ENCODE measurements at regions of chr3 and their contacts with region 1.

Region 1: GRCh38 chr3:28241221-28242160 is at the start of gene CMC1:
- DNase-seq: peak; percentile 94 to 98 (median 97)
- H3K4me3 ChIP-seq: peak within 1 kb of the TSS; percentile 63 to 100 (median 91)
- H3K27ac ChIP-seq: peak within 1 kb of the TSS in 52 of 59 donors; percentile 3 to 90 (median 72)
- H3K27me3 ChIP-seq: no peaks in the 10 kb centered on the region
- CTCF ChIP-seq: peak in 30 of 56 donors; percentile 5 to 57 (median 24)
- total RNA-seq, gene CMC1: 10.0 to 27.2 (median 17.9) TPM

Region 2: DNA sequence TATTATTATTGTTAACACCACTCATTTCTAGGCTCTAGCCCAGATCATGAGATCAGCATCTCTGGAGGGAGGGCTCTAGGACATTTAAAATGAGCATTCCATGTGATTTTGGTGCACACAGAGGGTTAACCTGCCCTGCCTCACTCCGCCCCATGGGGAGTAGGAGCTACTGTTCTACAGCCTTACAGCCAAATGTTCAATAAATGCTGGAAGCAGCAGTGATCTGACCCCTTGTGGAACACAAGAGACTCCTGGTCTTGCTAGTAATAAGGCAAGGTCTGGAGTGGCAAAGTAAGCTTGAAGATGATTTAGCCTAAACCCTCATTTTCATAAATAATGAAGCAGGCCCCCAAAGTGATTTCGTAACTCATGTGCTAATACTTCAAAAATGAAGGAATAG is 352.9 kb before region 1 on chr3:
- intact Hi-C with region 1: no loop called
- DNase-seq: no peak
- H3K4me3 ChIP-seq: no peak overlapping the region
- H3K27ac ChIP-seq: no peak overlapping the region
- H3K27me3 ChIP-seq: peaks cover 0 to 15% (median 0%) of the 10 kb centered on the region in 45 donors
- CTCF ChIP-seq: no peak

Region 3: GRCh38 chr3:27960133-27960532 is 281.4 kb before region 1 on chr3:
- intact Hi-C with region 1: no loop called
- DNase-seq: no peak
- H3K4me3 ChIP-seq: no peak overlapping the region
- H3K27ac ChIP-seq: no peak overlapping the region
- H3K27me3 ChIP-seq: peaks cover 0 to 6% (median 0%) of the 10 kb centered on the region in 45 donors
- CTCF ChIP-seq: no peak

Region 4: GRCh38 chr3:28348629-28349483 is 107.4 kb after region 1 on chr3 and contains the starts of genes AZI2 and ZCWPW2:
- intact Hi-C with region 1: loop called (anchors 5 kb)
- DNase-seq: peak; percentile 78 to 93 (median 89)
- H3K4me3 ChIP-seq: peak within 1 kb of the TSS; percentile 50 to 98 (median 86)
- H3K27ac ChIP-seq: peak within 1 kb of the TSS; percentile 86 to 100 (median 97)
- H3K27me3 ChIP-seq: no peaks in the 10 kb centered on the region
- CTCF ChIP-seq: peak in 45 of 56 donors; percentile 8 to 64 (median 36)
- total RNA-seq, gene AZI2: 42.8 to 93.5 (median 68.1) TPM
- total RNA-seq, gene ZCWPW2: 3.0 to 9.4 (median 5.4) TPM

Region 5: GRCh38 chr3:28916713-28917499 is 675.4 kb after region 1 on chr3:
- intact Hi-C with region 1: no loop called
- DNase-seq: peak in 6 of 10 donors; percentile 11 to 60 (median 39)
- H3K4me3 ChIP-seq: peak overlapping the region in 55 of 59 donors; percentile 1 to 64 (median 38)
- H3K27ac ChIP-seq: peak overlapping the region in 46 of 59 donors; percentile 6 to 78 (median 49)
- H3K27me3 ChIP-seq: no peaks in the 10 kb centered on the region
- CTCF ChIP-seq: peak in 53 of 56 donors; percentile 17 to 64 (median 49)